ENCODE measurements at regions of chr2 and their contacts with region 1.

Region 1: GRCh38 chr2:97995734-97996624 is at the start of gene TMEM131:
- DNase-seq: peak; percentile 92
- H3K4me3 Mint-ChIP-seq: peak within 1 kb of the TSS; percentile 87
- H3K27ac Mint-ChIP-seq: peak within 1 kb of the TSS; percentile 75
- H3K4me1 Mint-ChIP-seq: peaks cover 22% of the 10 kb centered on the region
- H3K27me3 Mint-ChIP-seq: no peaks in the 10 kb centered on the region
- CTCF ChIP-seq: no peak
- total RNA-seq, gene TMEM131: 42.2 and 42.8 TPM in 2 replicates

Region 2: GRCh38 chr2:97926946-97927345 is 69.0 kb before region 1 on chr2:
- CTCF ChIA-PET with region 1: no interaction called
- POLR2A ChIA-PET with region 1: interaction called, 4 read pairs
- intact Hi-C with region 1: loop called (anchors 5 kb)
- DNase-seq: no peak
- H3K4me3 Mint-ChIP-seq: no peak overlapping the region
- H3K27ac Mint-ChIP-seq: no peak overlapping the region
- H3K4me1 Mint-ChIP-seq: peaks cover 16% of the 10 kb centered on the region
- H3K27me3 Mint-ChIP-seq: no peaks in the 10 kb centered on the region
- CTCF ChIP-seq: no peak

Region 3: DNA sequence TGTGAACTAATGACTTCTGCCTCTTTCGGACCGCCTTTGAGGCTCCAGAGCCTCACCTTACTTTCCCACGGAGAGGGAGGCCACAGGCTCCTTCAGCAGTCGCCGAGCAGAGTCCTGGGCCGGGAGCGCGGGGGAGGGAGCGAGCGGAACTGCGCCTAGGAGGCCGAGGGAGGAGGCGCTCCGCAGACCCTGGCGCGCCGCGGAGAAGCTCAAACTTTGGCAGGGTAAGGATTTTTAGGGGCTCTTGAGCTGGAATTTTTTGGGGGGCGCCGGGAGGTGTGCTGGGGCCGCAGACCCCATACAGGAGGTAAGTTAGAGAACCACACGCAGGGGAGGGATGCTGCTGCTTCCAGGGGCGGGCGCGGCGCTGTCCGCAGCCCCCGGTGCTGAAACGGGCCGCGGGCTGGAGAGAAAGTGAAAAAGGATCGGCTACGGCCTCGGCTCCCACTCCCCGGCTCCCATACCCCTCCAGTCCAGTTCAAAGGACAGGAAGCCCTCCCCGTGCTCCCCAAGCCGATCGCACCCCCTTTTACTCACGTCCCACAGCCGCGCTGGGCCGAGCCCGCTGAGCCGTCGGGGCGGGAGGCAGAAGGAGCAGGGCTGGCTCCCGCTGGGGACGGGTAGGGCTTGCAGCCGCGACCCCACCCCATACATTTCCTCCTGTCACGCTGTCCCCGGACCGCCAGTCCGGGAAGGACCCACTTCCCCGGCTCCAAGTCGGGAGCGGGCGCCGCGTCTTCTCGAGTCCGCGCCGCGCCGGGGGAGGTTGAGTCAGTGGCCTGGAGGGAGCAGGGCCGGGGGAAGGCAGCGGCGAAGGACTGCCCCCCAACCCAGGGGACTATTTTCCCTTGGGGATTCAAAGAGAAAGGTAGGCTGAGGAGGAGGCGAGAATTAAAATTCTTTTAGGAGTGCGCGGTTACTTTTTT is 350.6 kb after region 1 on chr2 and contains the start of gene CNGA3:
- CTCF ChIA-PET with region 1: no interaction called
- POLR2A ChIA-PET with region 1: no interaction called
- intact Hi-C with region 1: no loop called
- DNase-seq: no peak
- H3K4me3 Mint-ChIP-seq: no peak within 1 kb of the TSS
- H3K27ac Mint-ChIP-seq: no peak within 1 kb of the TSS
- H3K4me1 Mint-ChIP-seq: no peaks in the 10 kb centered on the region
- H3K27me3 Mint-ChIP-seq: peaks cover 25% of the 10 kb centered on the region
- CTCF ChIP-seq: no peak
- total RNA-seq, gene CNGA3: not detected in 2 replicates

Measured in MCF 10A (cell line).